Natural killer cell (primary cell): ENCODE measurements at regions of chr10 and their contacts with region 1.

Region 1: GRCh38 chr10:33134011-33134751 is 176.2 kb upstream of the ITGB1 start:
- DNase-seq: peak in 1 of 2 donors; percentile 84
- ATAC-seq: peak; percentile 52 to 74 (median 74)
- H3K4me3 ChIP-seq: no peak overlapping the region
- H3K4me3 Mint-ChIP-seq: no peak overlapping the region
- H3K27ac ChIP-seq: peak overlapping the region; percentile 39
- H3K27ac Mint-ChIP-seq: peak overlapping the region; percentile 45 to 67
- H3K4me1 ChIP-seq: peaks cover 45% of the 10 kb centered on the region
- H3K4me1 Mint-ChIP-seq: peaks cover 45 to 49% of the 10 kb centered on the region in 2 donors
- H3K27me3 ChIP-seq: no peaks in the 10 kb centered on the region
- H3K27me3 Mint-ChIP-seq: no peaks in the 10 kb centered on the region
- CTCF ChIP-seq: no peak

Region 2: DNA sequence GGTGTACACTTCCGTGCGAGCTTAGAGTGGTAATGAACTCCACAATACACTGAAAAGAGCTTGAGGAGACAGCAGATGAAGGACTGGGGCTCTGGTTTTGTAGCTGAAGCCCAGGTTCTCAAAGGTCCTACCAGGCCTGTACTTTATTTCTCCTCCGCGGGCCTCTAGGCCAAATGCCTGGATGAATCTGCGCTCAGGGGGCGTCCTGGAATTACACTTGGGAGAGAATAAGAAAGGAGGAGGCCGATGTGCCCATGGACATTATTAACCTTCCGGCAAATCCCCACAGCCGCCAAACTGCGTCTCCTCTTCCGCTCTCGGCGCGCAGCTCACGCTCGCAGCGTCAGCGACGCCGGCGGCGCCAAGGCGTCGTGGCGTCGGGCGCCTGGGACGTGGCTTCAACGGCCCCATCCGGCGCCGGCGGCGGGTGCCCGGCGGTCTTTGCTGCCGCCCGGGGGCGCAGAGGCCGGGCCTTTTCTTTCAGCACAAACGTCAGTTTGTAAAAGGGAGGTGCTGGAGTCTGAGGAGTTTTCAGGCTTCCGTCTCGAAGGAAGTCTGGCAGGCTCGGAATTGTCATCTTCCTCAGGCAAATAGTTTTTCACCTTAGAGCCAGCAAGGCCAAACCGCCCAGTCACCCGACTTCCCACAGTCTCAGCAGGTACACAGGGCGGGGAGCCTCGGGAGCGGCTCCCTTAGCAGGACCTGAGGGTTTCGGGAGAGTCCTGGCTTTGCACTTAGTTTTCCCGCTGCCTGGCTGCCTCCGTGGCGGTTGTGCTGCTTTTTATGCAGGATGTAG is 688.2 kb before region 1 on chr10 and contains the start of gene CCDC7:
- intact Hi-C with region 1: loop called (anchors 10 kb)
- DNase-seq: peak; percentile 81 to 96
- ATAC-seq: peak; percentile 96 to 98 (median 97)
- H3K4me3 ChIP-seq: peak within 1 kb of the TSS; percentile 83
- H3K4me3 Mint-ChIP-seq: peak within 1 kb of the TSS; percentile 87
- H3K27ac ChIP-seq: peak within 1 kb of the TSS; percentile 100
- H3K27ac Mint-ChIP-seq: peak within 1 kb of the TSS; percentile 83 to 98
- H3K4me1 ChIP-seq: peaks cover 3% of the 10 kb centered on the region
- H3K4me1 Mint-ChIP-seq: peaks cover 14 to 21% of the 10 kb centered on the region in 2 donors
- H3K27me3 ChIP-seq: no peaks in the 10 kb centered on the region
- H3K27me3 Mint-ChIP-seq: peaks cover 9 to 24% of the 10 kb centered on the region in 2 donors
- CTCF ChIP-seq: peak; percentile 54
- total RNA-seq, gene CCDC7: 39.0 to 51.1 (median 42.8) TPM

Region 3: DNA sequence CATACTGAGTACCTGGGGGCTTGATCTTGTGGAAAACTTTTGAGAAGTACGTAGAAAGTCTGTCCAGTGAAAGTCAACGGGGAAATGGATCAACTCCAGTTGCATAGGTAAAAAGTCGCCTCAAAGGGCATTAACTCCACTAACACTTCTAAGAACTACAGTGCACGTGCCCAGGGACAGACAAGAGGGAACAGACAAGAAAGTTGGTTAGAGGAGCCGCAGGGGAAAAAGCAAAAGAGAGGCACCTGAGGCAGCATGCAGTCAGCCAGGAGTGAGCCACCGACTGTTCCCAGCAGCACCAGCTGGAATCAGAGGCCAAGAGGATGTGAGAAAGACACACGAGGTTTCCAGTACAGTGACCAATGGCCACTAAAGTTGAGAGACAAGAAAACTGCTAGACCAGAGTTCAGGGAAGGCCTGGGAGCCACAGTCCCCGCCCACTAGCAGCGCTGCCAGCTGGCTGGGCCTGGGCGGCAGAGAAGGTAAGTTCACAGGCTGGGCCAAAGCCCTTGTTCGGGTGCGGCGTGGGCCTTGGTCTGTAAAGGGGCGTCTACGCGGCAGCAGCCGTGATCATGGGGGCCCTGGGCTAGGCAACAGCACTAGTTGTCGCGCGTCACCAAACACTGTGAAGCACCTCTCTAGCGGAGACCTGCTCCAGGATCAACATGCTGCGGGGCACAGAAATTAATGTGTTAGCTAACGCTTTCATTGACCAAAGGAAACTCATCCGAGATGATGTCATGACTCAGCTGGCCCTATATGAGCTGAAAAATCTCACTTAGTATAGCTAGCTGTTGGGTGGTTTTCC is 190.1 kb before region 1 on chr10:
- intact Hi-C with region 1: loop called (anchors 10 kb)
- DNase-seq: no peak
- ATAC-seq: no peak
- H3K4me3 ChIP-seq: no peak overlapping the region
- H3K4me3 Mint-ChIP-seq: no peak overlapping the region
- H3K27ac ChIP-seq: no peak overlapping the region
- H3K27ac Mint-ChIP-seq: peak overlapping the region; percentile 41 to 72
- H3K4me1 ChIP-seq: peaks cover 38% of the 10 kb centered on the region
- H3K4me1 Mint-ChIP-seq: peaks cover 67 to 72% of the 10 kb centered on the region in 2 donors
- H3K27me3 ChIP-seq: no peaks in the 10 kb centered on the region
- H3K27me3 Mint-ChIP-seq: no peaks in the 10 kb centered on the region
- CTCF ChIP-seq: no peak

Region 4: GRCh38 chr10:33099748-33100147 is 34.4 kb before region 1 on chr10:
- intact Hi-C with region 1: loop called (anchors 5 kb)
- DNase-seq: no peak
- ATAC-seq: peak in 1 of 3 donors; percentile 29
- H3K4me3 ChIP-seq: no peak overlapping the region
- H3K4me3 Mint-ChIP-seq: peak overlapping the region; percentile 84
- H3K27ac ChIP-seq: no peak overlapping the region
- H3K27ac Mint-ChIP-seq: peak overlapping the region; percentile 59 to 82
- H3K4me1 ChIP-seq: peaks cover 11% of the 10 kb centered on the region
- H3K4me1 Mint-ChIP-seq: peaks cover 19 to 32% of the 10 kb centered on the region in 2 donors
- H3K27me3 ChIP-seq: no peaks in the 10 kb centered on the region
- H3K27me3 Mint-ChIP-seq: no peaks in the 10 kb centered on the region
- CTCF ChIP-seq: no peak